Psoas muscle (tissue), 8 donors: ENCODE measurements at regions of chr10 and their contacts with region 1.

Region 1: DNA sequence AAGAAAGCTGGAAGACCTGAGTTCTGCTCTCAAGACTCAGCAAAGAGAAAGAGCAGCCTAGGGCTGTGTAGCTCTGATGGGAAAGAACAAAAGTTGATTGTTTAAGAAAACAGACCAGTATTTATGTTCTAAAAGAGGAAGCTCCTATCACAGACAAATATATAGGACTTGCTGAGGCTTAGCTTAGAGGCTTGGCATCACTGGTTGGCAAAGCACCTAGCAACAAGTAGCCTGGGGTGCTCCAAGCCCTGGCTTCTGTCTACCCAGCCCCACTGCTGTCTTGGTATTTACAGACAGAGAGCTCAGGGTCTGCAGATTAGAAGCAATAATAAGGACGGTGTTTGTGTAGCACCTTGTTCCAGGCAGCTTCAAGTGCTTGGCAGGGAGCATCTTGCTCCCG is 36.9 kb upstream of the CCDC3 start:
- DNase-seq: no peak
- ATAC-seq: no peak
- H3K4me3 ChIP-seq: no peak overlapping the region
- H3K27ac ChIP-seq: no peak overlapping the region
- H3K4me1 ChIP-seq: no peaks in the 10 kb centered on the region
- H3K27me3 ChIP-seq: no peaks in the 10 kb centered on the region
- CTCF ChIP-seq: no peak

Region 2: DNA sequence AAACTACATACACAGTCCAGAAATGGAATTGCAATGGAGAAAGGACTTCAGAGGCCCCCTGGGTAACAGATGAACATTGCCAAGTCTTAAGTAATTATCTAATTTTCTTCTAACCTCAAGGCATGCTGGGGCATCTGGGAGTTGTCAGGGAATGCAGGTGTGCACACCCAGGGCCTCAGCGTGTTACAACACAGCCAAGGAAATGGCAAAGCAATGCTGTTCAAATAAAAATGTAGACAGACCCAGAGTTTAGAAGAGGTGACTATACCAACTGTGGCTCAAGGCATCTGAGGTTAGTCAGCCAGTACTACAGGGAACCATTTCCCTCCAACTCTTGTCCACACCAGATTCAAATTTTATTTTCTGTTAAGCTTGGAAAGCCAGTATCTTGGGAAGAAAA is 110.5 kb before region 1 on chr10:
- intact Hi-C with region 1: no loop called
- DNase-seq: no peak
- ATAC-seq: no peak
- H3K4me3 ChIP-seq: no peak overlapping the region
- H3K27ac ChIP-seq: no peak overlapping the region
- H3K4me1 ChIP-seq: no peaks in the 10 kb centered on the region
- H3K27me3 ChIP-seq: no peaks in the 10 kb centered on the region
- CTCF ChIP-seq: no peak

Region 3: DNA sequence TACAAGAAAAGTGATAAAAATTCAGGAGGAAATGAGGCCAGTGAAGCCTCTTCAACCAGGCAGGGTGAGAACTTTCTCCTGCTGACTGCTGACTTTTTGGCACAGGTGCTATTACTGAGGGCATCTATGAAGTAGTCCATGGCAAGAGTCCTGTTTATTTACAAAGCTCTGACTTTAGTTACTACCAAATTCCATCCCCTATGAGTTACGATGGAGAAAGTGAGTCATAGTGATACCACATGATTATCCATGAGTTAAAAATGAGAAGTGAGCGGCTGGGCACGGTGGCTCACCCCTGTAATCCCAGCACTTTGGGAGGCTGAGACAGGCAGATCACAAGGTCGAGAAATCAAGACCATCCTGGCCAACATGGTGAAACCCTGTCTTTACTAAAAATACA is 56.8 kb before region 1 on chr10:
- intact Hi-C with region 1: no loop called
- DNase-seq: no peak
- ATAC-seq: peak in 2 of 4 donors; percentile 32 to 60
- H3K4me3 ChIP-seq: no peak overlapping the region
- H3K27ac ChIP-seq: no peak overlapping the region
- H3K4me1 ChIP-seq: no peaks in the 10 kb centered on the region
- H3K27me3 ChIP-seq: no peaks in the 10 kb centered on the region
- CTCF ChIP-seq: no peak

Region 4: GRCh38 chr10:13915710-13916109 is 877.3 kb after region 1 on chr10:
- intact Hi-C with region 1: loop called in 1 of 2 experiments (anchors 5 kb)
- DNase-seq: no peak
- ATAC-seq: no peak
- H3K4me3 ChIP-seq: no peak overlapping the region
- H3K27ac ChIP-seq: no peak overlapping the region
- H3K4me1 ChIP-seq: no peaks in the 10 kb centered on the region
- H3K27me3 ChIP-seq: no peaks in the 10 kb centered on the region
- CTCF ChIP-seq: no peak